Right ventricle myocardium inferior (tissue), 1 donor: ENCODE measurements at regions of chr18 and their contacts with region 1.

Region 1: GRCh38 chr18:9673296-9674251 is 34.5 kb upstream of the RAB31 start:
- DNase-seq: no peak
- ATAC-seq: peak; percentile 91

Region 2: DNA sequence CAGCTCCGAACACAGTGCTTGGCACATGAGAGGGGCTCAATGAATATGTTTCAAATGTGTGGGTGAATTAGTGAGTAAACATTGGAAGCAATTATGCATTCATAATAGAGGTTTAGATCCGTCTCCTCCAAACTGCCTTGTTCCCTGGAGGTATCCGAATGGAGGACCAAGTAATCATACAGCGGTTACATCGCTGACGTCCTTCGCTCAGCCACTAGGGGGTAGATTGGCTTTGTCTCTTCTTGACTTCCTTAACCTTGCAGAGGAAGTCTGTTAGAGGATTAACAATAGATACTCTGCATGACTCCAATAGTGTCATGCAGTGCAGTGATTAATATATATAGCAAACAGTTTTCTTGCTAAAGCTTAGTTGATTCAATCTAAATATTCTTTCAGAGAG is 1589.4 kb before region 1 on chr18:
- intact Hi-C with region 1: no loop called
- DNase-seq: no peak
- ATAC-seq: peak; percentile 50

Region 3: DNA sequence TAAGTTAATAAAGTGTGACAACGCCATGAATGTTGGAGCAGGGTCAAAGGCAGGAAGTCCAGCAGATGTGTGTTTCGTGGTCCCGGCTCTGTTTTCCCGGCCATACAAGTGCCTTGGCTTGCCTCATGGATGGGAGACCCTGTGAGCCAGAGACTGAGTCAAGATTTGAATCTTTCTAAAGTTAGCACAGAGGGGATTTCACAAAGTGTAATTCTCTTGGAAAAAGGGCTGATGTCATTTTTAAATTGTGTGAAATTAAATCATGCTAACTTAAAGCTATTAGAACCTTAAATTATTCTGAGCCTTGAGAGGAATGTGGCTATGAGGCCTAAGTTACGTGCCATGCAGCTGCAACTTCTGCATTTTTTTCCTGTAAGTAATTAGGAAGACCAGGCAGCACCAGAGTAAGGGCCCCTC is 236.5 kb before region 1 on chr18:
- intact Hi-C with region 1: no loop called
- DNase-seq: no peak
- ATAC-seq: peak; percentile 64

Region 4: GRCh38 chr18:9587924-9588323 is 85.7 kb before region 1 on chr18:
- intact Hi-C with region 1: no loop called
- DNase-seq: no peak
- ATAC-seq: peak; percentile 88

Region 5: GRCh38 chr18:9614401-9615279 is 58.9 kb before region 1 on chr18 and contains the start of gene PPP4R1:
- intact Hi-C with region 1: loop called (anchors 1 kb)
- DNase-seq: peak; percentile 93
- ATAC-seq: peak; percentile 78
- total RNA-seq, gene PPP4R1: 62.5 TPM